ENCODE measurements at regions of chr20 and their contacts with region 1.

Region 1: DNA sequence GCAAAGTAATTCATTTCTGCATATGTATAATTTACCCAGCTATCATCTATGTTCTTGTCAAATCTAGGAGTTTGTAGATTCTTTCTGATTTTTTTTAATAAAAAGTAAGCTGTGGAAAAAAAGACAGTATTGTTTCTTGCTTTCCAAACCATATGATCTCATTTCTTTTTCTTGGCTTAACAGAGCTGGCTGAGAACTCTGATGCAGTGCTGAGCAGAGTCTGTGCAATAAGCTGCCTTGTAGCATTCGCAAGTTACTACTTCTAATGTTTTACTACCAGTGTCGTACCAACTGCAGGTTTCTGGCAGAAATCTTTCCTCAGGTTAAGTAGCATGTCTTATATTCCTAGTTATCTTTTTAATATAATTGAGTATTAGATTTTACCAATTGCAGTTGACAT is 15.6 kb downstream of the RRBP1 start:
- DNase-seq: no peak
- H3K4me3 ChIP-seq: no peak overlapping the region
- H3K27ac ChIP-seq: no peak overlapping the region
- H3K4me1 ChIP-seq: no peaks in the 10 kb centered on the region
- H3K27me3 ChIP-seq: no peaks in the 10 kb centered on the region
- CTCF ChIP-seq: no peak

Region 2: GRCh38 chr20:17946040-17946439 is 279.6 kb after region 1 on chr20:
- CTCF ChIA-PET with region 1: no interaction called
- POLR2A ChIA-PET with region 1: interaction called, 12 read pairs
- intact Hi-C with region 1: no loop called
- DNase-seq: no peak
- H3K4me3 ChIP-seq: no peak overlapping the region
- H3K27ac ChIP-seq: no peak overlapping the region
- H3K4me1 ChIP-seq: no peaks in the 10 kb centered on the region
- H3K27me3 ChIP-seq: no peaks in the 10 kb centered on the region
- CTCF ChIP-seq: no peak

Measured in PC-9 (cell line).